ENCODE measurements at regions of chr10 and their contacts with region 1.

Region 1: GRCh38 chr10:79374312-79375191 is 27.3 kb downstream of the PPIF start:
- DNase-seq: peak; percentile 58 to 95 (median 88)

Region 2: DNA sequence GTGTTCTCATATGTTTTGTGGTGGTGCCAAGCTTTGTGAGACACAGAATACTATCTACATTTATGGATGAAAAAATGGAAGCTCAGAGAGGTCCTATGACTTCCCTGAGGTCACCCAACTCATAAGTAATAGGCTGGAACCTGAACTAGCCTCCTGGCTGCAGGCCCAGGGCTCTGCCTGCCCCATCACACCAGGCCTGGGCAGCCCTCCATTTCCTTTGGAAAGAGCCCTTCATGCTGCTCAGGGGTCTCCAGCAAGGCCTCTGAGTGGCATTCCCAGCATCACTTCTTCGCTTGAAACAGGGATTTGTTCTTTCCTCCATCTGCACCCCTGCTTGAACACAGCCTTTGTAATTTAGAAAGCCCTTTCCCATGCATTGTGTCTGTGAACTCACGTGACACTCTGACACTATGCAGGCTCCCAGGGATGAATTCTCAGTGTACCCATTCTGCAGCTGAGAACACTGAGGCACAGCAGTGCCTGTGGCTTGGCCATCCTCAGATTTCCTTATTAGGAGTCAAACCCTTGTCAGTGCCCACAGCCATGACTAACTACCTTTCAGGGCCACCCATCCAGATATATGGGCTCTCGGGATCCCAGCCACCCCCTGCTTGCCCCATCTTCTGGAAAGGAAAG is 155.1 kb before region 1 on chr10:
- intact Hi-C with region 1: no loop called
- DNase-seq: peak in 1 of 42 donors; percentile 40

Region 3: GRCh38 chr10:79463578-79464496 is 89.3 kb after region 1 on chr10:
- intact Hi-C with region 1: loop called (anchors 2 kb)
- DNase-seq: no peak